Tibial artery (tissue), 4 donors: ENCODE measurements at regions of chr7 and their contacts with region 1.

Region 1: DNA sequence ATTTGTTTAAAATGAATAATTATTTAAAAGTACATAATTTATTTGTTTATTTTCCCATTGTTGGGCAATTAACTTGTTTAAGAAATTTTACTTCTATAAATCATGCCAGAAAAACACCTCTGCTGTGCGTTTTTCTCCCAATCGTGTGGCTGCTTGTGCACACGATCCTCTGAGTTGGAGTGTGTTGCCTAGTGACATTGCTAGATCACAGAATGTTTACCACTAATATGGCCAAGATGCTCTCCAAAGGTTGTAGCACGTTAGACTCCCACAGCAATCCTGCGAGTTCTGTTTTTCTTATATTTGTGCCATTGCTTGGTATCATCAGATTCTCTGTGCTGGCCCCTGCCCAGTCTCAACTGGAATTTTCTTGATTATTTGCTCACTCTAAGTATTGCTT is 207.1 kb upstream of the ADCY1 start:
- DNase-seq: no peak
- H3K4me3 ChIP-seq: no peak overlapping the region
- H3K27ac ChIP-seq: no peak overlapping the region
- H3K4me1 ChIP-seq: no peaks in the 10 kb centered on the region
- H3K27me3 ChIP-seq: no peaks in the 10 kb centered on the region
- CTCF ChIP-seq: no peak

Region 2: DNA sequence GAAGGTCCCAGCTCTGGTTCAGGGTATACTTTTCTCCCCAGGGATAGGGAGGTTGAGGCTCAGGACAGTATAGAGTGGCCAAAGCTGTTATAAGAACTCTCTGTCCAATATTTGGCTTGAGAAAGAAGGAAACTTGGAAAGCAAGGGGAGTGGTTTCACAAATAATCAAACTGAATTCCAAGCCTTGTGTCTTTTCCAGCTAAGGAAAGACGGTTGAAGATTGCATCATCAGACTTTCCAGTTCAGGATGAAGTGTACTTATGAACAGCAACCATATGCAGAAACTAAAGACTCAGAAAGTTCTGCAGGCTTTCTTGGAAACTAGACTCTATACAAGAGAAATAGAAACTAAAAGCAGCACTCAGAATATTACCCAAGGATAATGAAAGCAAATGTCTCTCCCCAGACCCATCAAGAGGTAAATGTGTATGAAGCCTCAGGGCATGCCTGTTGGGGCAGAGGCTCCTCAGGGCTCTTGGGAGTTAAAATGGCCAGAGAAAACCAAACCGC is 163.0 kb before region 1 on chr7:
- intact Hi-C with region 1: no loop called
- DNase-seq: no peak
- H3K4me3 ChIP-seq: peak overlapping the region in 1 of 2 donors; percentile 23
- H3K27ac ChIP-seq: no peak overlapping the region
- H3K4me1 ChIP-seq: peaks cover 0 to 4% (median 1%) of the 10 kb centered on the region in 4 donors
- H3K27me3 ChIP-seq: no peaks in the 10 kb centered on the region
- CTCF ChIP-seq: no peak

Region 3: GRCh38 chr7:45649560-45650345 is 282.7 kb after region 1 on chr7:
- intact Hi-C with region 1: loop called (anchors 5 kb)
- DNase-seq: peak in 1 of 2 donors; percentile 60
- H3K4me3 ChIP-seq: no peak overlapping the region
- H3K27ac ChIP-seq: no peak overlapping the region
- H3K4me1 ChIP-seq: no peaks in the 10 kb centered on the region
- H3K27me3 ChIP-seq: no peaks in the 10 kb centered on the region
- CTCF ChIP-seq: no peak